Activated CD4-positive, alpha-beta memory T cell treated with anti-CD3 and anti-CD28 coated beads for 36 hours (primary cell): ENCODE measurements at regions of chr12 and their contacts with region 1.

Region 1: DNA sequence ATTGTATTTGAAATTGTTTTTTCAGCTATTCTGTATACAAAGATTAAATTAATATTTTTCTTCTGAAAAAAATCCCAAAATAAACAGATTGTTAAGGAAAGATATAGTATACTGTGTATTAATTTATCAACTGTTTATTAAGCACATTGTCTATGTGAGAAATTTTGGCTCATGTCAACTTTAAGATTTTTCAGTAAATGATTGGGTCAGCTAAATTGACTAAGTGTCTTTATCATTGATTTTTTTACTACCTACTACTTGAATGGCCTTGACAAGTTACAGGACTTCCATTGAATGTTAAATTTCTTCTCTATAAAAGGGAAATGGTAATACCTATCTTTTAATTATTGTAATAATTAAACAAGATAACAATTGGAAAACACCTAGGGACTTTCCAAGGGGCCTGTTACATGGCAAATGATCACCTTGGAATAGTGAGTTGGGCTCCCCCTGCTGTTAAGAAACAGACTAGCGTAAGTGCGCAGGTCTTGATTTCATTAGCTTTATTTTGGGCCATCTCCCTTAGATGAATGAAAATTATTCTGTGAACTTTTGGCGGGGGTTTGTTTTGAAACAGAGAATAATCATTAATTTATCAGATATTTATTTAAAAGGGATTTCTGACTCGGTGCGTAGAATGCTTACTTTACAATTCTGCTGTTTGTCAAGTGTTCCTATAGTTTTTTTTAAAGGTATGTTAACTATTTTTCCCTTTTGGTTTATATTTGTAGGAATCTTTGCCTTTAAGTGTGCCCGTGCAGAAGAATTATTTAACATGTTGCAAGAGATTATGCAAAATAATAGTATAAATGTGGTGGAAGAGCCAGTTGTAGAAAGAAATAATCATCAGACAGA is 14.5 kb upstream of the CCT2 start:
- DNase-seq: peak; percentile 54
- H3K4me3 Mint-ChIP-seq: no peak overlapping the region
- H3K27ac Mint-ChIP-seq: no peak overlapping the region
- H3K4me1 Mint-ChIP-seq: peaks cover 9% of the 10 kb centered on the region
- H3K27me3 Mint-ChIP-seq: no peaks in the 10 kb centered on the region

Region 2: DNA sequence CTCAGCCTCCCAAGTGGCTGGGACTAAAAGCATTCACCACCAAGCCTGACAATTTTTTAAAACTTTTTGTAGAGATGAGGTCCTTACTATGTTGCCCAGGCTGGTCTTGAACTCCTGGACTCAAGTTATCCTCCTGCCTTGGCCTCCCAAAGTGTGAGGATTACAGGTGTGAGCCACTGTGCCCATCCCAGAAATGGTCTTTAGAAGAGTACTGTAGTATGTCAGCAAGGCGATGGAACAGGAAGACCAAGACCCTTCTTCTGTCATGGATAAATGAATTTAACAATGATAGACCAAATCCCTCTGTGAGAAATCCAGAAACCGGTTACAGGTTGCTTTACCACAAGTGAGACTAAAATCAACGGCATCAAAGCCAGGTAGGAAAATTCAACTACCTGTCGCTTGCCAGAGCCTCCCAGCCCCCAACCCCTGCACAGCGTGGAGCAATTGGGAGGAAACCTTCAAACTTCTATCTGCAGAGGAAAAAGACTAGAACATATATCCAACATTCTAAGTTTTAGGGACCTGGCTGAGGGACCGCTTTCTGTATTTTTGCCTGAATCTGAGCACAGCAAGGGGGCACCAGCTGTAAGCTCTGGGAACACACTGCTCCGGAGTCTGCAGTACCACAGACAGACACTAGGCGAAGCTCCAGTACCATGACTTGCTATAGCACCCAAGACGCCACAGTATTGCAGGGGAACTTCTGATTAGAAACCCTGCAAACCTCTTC is 280.1 kb before region 1 on chr12:
- CTCF ChIA-PET with region 1: interaction called, 22 read pairs
- POLR2A ChIA-PET with region 1: no interaction called
- intact Hi-C with region 1: loop called (anchors 1 kb)
- DNase-seq: peak; percentile 87
- H3K4me3 Mint-ChIP-seq: no peak overlapping the region
- H3K27ac Mint-ChIP-seq: no peak overlapping the region
- H3K4me1 Mint-ChIP-seq: peaks cover 7% of the 10 kb centered on the region
- H3K27me3 Mint-ChIP-seq: peaks cover 15% of the 10 kb centered on the region

Region 3: GRCh38 chr12:69388371-69388770 is 182.4 kb before region 1 on chr12:
- CTCF ChIA-PET with region 1: interaction called, 45 read pairs
- POLR2A ChIA-PET with region 1: no interaction called
- intact Hi-C with region 1: no loop called
- DNase-seq: no peak
- H3K4me3 Mint-ChIP-seq: no peak overlapping the region
- H3K27ac Mint-ChIP-seq: no peak overlapping the region
- H3K4me1 Mint-ChIP-seq: peaks cover 21% of the 10 kb centered on the region
- H3K27me3 Mint-ChIP-seq: no peaks in the 10 kb centered on the region

Region 4: GRCh38 chr12:69470189-69471075 is 100.3 kb before region 1 on chr12 and contains the start of gene FRS2:
- CTCF ChIA-PET with region 1: interaction called, 15 read pairs
- POLR2A ChIA-PET with region 1: no interaction called
- intact Hi-C with region 1: loop called (anchors 1 kb)
- DNase-seq: peak; percentile 92
- H3K4me3 Mint-ChIP-seq: peak within 1 kb of the TSS; percentile 98
- H3K27ac Mint-ChIP-seq: peak within 1 kb of the TSS; percentile 93
- H3K4me1 Mint-ChIP-seq: peaks cover 41% of the 10 kb centered on the region
- H3K27me3 Mint-ChIP-seq: no peaks in the 10 kb centered on the region
- total RNA-seq, gene FRS2: 8.6 to 9.5 TPM

Region 5: DNA sequence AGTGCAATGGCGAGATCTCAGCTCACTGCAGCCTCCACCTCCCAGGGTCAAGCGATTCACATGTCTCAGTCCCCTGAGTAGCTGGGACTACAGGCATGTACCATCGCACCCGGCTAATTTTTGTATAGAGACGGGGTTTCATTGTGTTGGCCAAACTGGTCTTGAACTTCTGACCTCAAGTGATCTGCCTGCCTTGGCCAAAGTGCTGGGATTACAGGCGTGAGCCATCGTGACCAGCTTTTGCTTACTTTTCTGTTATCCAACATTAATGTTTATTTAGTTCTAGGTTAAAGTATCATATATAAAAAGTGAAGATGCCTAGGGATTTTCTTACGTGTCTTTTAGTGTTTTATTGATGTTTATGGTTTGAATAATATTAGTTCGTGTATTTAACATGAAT is 14.4 kb before region 1 on chr12:
- CTCF ChIA-PET with region 1: interaction called, 20 read pairs
- POLR2A ChIA-PET with region 1: no interaction called
- intact Hi-C with region 1: no loop called
- DNase-seq: no peak
- H3K4me3 Mint-ChIP-seq: no peak overlapping the region
- H3K27ac Mint-ChIP-seq: no peak overlapping the region
- H3K4me1 Mint-ChIP-seq: no peaks in the 10 kb centered on the region
- H3K27me3 Mint-ChIP-seq: no peaks in the 10 kb centered on the region